SK-N-SH (cell line): ENCODE measurements at regions of chr19 and their contacts with region 1.

Region 1: DNA sequence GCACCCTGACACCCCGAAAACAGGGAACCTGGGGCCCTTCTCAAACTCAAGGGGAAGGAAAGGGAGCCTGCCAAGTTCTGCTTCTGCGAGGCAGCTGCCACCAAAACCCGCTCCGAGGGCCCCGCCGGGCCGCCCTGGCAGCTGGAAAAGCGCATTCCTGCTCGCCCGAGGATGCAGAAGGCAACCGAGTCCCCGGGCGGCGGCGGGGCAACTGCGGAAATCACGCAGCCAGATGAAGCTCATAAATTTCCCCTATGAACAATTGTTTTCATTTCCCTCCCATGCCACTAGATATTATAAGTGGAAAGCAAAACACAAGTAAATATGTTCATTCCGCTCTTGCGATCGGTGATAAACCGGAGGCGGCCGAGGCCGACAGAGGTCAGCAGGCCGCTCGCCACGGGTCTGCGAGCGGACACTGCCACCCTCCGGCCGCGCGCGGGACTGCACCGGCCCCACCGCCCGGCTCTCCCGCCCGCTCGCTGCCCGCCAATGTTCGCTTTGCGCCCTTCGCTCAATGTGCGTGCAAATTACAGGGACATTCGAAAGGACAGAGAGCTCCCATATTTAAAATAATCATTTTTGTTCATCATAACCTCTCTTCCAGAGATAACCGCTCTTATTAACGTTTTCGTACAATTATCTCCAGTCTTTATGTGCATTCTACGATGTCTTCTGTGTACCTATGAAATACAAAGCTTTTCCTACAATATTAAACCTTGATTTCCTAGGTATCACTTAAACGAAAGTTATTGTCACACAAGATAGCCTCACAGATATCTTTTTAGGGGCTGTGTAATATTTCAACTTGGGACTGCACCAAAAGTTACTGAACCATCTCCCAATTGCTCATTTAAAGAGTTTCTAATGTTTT is 120.8 kb upstream of the ZNF507 start:
- DNase-seq: peak; percentile 94
- H3K4me3 ChIP-seq: peak overlapping the region in 1 of 2 experiments; percentile 44; a peak in 1 of 4 replicates
- H3K27ac ChIP-seq: no peak overlapping the region
- H3K4me1 ChIP-seq: no peaks in the 10 kb centered on the region; a peak in 1 of 4 replicates
- H3K27me3 ChIP-seq: no peaks in the 10 kb centered on the region
- CTCF ChIP-seq: peak; percentile 93
- EP300 ChIP-seq: no peak
- RAD21 ChIP-seq: peak; percentile 92

Region 2: GRCh38 chr19:30669329-30670010 is 1555.1 kb before region 1 on chr19:
- CTCF ChIA-PET with region 1: interaction called, 29 read pairs
- POLR2A ChIA-PET with region 1: no interaction called
- DNase-seq: peak; percentile 83
- H3K4me3 ChIP-seq: no peak overlapping the region; a peak in 2 of 4 replicates
- H3K27ac ChIP-seq: no peak overlapping the region
- H3K4me1 ChIP-seq: peaks cover 0 to 5% of the 10 kb centered on the region in 2 experiments; a peak in 1 of 4 replicates
- H3K27me3 ChIP-seq: no peaks in the 10 kb centered on the region
- CTCF ChIP-seq: peak; percentile 84
- EP300 ChIP-seq: no peak
- RAD21 ChIP-seq: peak; percentile 83

Region 3: DNA sequence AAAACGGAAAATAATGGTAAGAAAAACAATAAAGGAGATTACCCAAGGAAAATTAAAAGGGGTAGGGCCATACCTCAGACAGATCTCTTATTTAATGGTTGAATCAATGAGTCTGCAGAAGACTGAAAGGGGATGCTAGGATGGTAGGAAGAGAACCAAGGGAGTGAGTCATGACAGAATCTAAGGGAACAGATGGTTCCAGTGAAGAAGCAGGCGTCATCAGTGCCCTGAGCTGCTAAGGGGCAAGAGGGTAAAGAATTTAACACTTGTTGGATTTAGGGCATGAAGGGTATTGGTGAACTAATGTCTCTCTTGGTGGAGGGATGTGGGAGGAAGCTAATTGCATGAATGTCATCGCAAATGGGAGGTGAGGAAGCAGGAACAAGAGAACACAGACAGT is 546.2 kb before region 1 on chr19:
- CTCF ChIA-PET with region 1: interaction called, 14 read pairs
- POLR2A ChIA-PET with region 1: no interaction called
- DNase-seq: no peak
- H3K4me3 ChIP-seq: no peak overlapping the region
- H3K27ac ChIP-seq: no peak overlapping the region
- H3K4me1 ChIP-seq: no peaks in the 10 kb centered on the region
- H3K27me3 ChIP-seq: no peaks in the 10 kb centered on the region
- CTCF ChIP-seq: no peak
- EP300 ChIP-seq: no peak
- RAD21 ChIP-seq: no peak

Region 4: GRCh38 chr19:32189956-32190706 is 34.5 kb before region 1 on chr19:
- CTCF ChIA-PET with region 1: interaction called, 13 read pairs
- POLR2A ChIA-PET with region 1: no interaction called
- DNase-seq: no peak
- H3K4me3 ChIP-seq: no peak overlapping the region
- H3K27ac ChIP-seq: no peak overlapping the region
- H3K4me1 ChIP-seq: no peaks in the 10 kb centered on the region
- H3K27me3 ChIP-seq: no peaks in the 10 kb centered on the region
- CTCF ChIP-seq: no peak
- EP300 ChIP-seq: no peak
- RAD21 ChIP-seq: no peak

Region 5: DNA sequence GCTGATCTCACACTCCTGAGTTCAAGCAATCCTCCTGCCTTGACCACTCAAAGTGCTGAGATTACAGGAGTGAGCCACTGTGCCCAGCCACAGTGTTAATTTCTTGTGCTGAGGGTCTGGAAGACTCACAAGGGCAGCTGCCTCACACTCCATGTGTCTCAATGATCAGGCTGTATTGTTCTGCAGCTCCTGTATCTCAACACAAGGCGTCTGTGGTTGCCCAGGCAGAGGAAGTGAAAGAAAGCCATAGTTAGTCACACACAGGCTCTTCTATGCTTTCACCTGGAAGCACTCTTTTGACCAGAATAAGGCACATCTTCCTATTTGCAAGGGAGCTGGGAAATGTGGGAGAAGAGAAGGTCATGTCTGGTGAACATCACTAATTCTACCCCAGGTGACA is 13.5 kb after region 1 on chr19:
- CTCF ChIA-PET with region 1: interaction called, 12 read pairs
- POLR2A ChIA-PET with region 1: no interaction called
- DNase-seq: no peak
- H3K4me3 ChIP-seq: no peak overlapping the region
- H3K27ac ChIP-seq: no peak overlapping the region
- H3K4me1 ChIP-seq: no peaks in the 10 kb centered on the region; a peak in 1 of 4 replicates
- H3K27me3 ChIP-seq: no peaks in the 10 kb centered on the region
- CTCF ChIP-seq: no peak
- EP300 ChIP-seq: no peak
- RAD21 ChIP-seq: no peak